Breast epithelium (tissue), 4 donors: ENCODE measurements at regions of chr4 and their contacts with region 1.

Region 1: GRCh38 chr4:41369697-41370096 is 113.0 kb downstream of the UCHL1 start:
- DNase-seq: peak in 1 of 2 donors; percentile 57
- H3K4me3 ChIP-seq: no peak overlapping the region
- H3K27ac ChIP-seq: peak overlapping the region; percentile 18 to 30
- H3K4me1 ChIP-seq: peaks cover 0 to 2% of the 10 kb centered on the region in 2 donors
- H3K27me3 ChIP-seq: no peaks in the 10 kb centered on the region
- CTCF ChIP-seq: no peak
- POLR2A ChIP-seq: no peak

Region 2: DNA sequence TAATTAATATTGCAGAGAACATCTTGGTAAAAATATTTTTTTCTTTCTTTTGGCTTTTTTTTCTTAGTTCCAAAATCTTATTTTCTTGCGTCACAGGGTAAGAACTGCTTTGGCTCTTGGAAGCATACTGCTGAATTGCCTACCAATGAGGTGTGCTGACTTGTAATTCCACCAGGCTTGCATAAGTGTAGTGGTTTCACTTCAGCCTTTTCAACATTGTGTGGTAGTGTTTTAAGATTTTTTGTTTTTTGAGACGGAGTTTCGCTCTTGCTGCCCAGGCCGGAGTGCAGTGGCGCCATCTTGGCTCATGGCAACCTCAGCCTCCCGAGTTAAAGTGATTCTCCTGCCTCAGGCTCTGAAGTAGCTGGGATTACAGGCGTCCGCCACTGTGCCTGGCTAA is 1270.7 kb before region 1 on chr4:
- intact Hi-C with region 1: loop called (anchors 5 kb)
- DNase-seq: no peak
- H3K4me3 ChIP-seq: no peak overlapping the region
- H3K27ac ChIP-seq: no peak overlapping the region
- H3K4me1 ChIP-seq: no peaks in the 10 kb centered on the region
- H3K27me3 ChIP-seq: no peaks in the 10 kb centered on the region
- CTCF ChIP-seq: no peak
- POLR2A ChIP-seq: no peak

Region 3: DNA sequence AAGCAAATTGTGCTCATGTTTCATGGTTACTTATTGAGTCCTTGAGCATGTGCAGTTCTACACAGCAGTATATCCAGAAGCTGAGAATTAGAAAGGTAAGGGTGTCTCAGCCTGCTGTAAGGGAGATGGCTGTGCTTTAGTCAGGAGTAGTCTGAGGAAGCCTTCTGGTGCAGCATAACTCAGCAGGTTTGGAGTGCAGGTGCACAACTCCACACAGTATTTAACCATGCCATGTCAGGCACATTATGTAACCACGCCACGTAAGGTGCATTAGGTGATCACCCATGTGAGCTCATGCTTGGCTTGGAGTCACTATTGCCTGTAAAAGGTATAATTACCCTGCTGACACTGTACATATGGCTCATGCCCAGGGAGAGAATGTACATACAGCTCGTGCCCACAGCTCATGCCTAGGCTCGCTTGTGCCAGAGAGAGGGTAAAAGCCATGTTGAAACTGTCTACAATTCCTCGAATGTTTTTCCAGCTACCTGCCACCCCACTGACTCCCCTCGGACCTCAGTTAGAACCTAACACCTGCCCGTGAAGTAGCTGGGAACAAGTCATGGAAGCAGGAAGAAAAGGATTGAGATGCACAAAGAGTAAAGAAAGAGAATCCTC is 75.1 kb before region 1 on chr4:
- intact Hi-C with region 1: loop called (anchors 2 kb)
- DNase-seq: no peak
- H3K4me3 ChIP-seq: no peak overlapping the region
- H3K27ac ChIP-seq: no peak overlapping the region
- H3K4me1 ChIP-seq: no peaks in the 10 kb centered on the region
- H3K27me3 ChIP-seq: no peaks in the 10 kb centered on the region
- CTCF ChIP-seq: no peak
- POLR2A ChIP-seq: no peak

Region 4: DNA sequence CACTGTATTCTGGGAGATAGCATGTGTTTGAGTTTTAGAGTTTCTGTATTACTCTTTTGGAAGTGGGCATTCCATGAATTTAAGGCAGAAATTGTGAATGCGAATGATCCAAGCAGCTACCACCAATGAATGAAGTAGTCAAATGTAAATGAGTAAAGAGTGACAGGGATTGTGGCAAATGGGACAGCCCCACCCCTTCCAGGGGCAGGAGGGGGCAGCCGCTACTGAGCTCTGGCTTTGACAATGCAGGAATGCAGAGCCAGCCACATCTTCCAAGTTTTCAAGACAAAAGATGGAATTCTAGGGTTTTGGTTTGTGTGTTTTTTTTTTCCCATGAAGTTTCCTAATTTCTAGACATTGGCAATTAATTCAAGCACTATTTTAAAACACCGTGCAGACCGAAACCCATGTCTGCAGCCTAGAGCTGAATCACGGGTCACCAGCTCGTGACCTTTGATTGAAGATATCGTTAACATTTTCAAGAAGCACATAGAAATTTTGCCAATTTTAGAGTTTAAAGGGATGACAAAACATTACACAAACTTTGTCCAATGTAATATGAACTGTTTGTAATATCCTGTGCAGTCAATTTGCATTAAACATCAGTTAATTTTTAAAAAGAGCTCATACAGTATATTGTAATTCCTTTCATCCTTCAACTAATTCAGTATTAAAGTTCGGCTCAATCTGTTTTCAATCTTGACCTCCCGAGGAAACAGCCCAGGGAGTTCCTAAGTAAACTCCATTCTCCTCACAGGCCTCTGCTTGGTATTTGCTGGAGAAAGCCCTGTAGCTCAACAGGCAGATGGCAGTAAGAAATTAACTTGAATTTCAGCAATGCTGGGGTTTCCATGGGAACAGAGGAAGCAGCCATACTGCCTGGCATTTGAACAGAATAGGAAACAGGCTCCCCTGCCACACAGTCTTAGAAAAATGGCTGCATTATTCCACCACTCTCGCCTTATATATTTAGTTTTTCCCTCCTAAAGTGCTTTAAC is 29.6 kb before region 1 on chr4:
- intact Hi-C with region 1: no loop called
- DNase-seq: no peak
- H3K4me3 ChIP-seq: no peak overlapping the region
- H3K27ac ChIP-seq: no peak overlapping the region
- H3K4me1 ChIP-seq: no peaks in the 10 kb centered on the region
- H3K27me3 ChIP-seq: no peaks in the 10 kb centered on the region
- CTCF ChIP-seq: no peak
- POLR2A ChIP-seq: no peak

Region 5: DNA sequence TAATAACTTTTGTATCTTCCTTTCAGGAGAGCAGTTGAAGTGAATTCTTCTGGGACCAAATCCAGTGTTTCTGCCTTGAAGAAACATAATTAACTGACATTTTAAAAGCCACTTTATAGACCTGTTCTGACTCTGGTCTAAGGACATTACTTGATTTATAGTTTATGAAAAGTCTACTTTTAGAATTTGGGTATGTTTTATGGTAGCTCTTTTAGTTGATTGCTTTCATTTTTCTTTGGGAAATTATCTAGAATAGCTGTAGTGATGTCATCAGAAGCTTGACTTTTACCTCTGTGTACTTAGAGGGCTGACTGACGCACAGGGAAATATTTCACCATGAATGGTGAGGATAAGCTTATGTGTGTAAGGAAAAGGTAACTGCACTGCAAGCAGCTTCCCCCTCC is 36.4 kb after region 1 on chr4:
- intact Hi-C with region 1: no loop called
- DNase-seq: no peak
- H3K4me3 ChIP-seq: no peak overlapping the region
- H3K27ac ChIP-seq: no peak overlapping the region
- H3K4me1 ChIP-seq: no peaks in the 10 kb centered on the region
- H3K27me3 ChIP-seq: no peaks in the 10 kb centered on the region
- CTCF ChIP-seq: no peak
- POLR2A ChIP-seq: no peak